Lower leg skin (tissue), 4 donors: ENCODE measurements at regions of chr4 and their contacts with region 1.

Region 1: GRCh38 chr4:139167774-139168444 is 9.1 kb downstream of the ELF2 start:
- DNase-seq: no peak
- H3K4me3 ChIP-seq: no peak overlapping the region
- CTCF ChIP-seq: no peak
- POLR2A ChIP-seq: no peak

Region 2: GRCh38 chr4:139108567-139109128 is 59.3 kb before region 1 on chr4:
- intact Hi-C with region 1: loop called (anchors 10 kb)
- DNase-seq: no peak
- H3K4me3 ChIP-seq: no peak overlapping the region
- CTCF ChIP-seq: no peak
- POLR2A ChIP-seq: no peak

Region 3: DNA sequence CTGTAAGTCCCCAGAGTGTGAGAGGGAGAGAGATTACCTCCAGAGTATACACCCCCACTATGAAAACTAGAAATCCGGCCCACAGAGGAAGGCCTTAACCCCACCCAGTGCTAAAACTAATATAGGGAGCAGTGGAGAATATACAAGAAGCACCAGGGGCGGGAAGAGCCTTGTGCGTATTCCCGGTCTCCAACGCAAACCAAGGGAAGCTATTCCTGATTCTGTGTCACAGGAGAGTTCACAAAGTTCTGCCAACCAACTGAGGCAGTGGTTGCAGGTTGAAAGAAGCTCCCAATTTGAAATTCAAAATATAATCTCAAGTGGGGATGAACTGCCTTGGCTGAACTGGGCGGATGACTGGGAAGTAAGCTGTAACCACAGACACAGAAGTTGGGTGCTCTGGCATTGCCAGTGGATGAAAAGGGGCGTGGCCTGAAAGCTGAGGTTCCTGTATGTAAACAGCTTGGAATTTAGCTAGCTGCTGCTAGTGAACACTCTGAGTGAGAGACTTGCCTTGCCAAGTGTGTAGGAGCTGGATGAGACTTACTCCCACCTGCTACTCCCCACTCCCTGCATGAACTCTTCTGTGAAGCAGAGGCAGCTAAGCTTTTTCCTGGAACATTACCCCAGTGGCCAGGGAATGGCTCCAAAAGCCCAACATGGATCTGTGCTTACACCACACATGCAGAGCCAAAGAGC is 23.6 kb before region 1 on chr4:
- intact Hi-C with region 1: no loop called
- DNase-seq: peak in 1 of 2 donors; percentile 68
- H3K4me3 ChIP-seq: no peak overlapping the region
- CTCF ChIP-seq: no peak
- POLR2A ChIP-seq: no peak